OCI-LY7 (cell line): ENCODE measurements at regions of chr12 and their contacts with region 1.

Region 1: GRCh38 chr12:49121047-49121696 is 10.0 kb downstream of the TUBA1B start:
- DNase-seq: peak; percentile 26
- H3K4me3 ChIP-seq: no peak overlapping the region
- H3K27ac ChIP-seq: no peak overlapping the region
- H3K4me1 ChIP-seq: no peaks in the 10 kb centered on the region
- CTCF ChIP-seq: peak; percentile 62

Region 2: GRCh38 chr12:49069507-49070346 is 51.4 kb before region 1 on chr12 and contains the start of gene RHEBL1:
- CTCF ChIA-PET with region 1: no interaction called
- POLR2A ChIA-PET with region 1: interaction called, 10 read pairs
- intact Hi-C with region 1: no loop called
- DNase-seq: peak; percentile 98
- H3K4me3 ChIP-seq: peak within 1 kb of the TSS; percentile 83
- H3K27ac ChIP-seq: peak within 1 kb of the TSS; percentile 28
- H3K4me1 ChIP-seq: peaks cover 10% of the 10 kb centered on the region
- CTCF ChIP-seq: peak; percentile 64
- total RNA-seq, gene RHEBL1: 3.0 and 3.7 TPM in 2 replicates

Region 3: DNA sequence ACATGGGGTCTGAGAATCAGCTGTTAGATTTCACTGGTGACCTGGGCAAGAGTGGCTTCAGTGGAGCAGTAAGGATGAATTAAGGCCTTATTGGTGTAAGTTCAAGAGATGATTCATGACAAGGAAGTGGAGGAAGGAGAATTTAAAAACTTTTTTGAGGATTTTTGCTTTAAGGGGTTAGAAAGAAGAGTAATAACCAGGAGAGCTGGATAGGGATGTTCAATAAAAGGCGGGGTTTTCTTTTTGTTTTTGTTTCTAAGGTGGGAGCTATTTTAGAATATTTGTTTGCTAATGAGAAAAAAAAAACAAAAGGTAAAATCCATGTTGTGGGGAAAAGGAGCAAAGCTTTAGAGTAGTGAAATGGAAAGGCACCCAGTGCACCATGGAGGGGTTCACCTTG is 25.2 kb after region 1 on chr12:
- CTCF ChIA-PET with region 1: no interaction called
- POLR2A ChIA-PET with region 1: no interaction called
- intact Hi-C with region 1: no loop called
- DNase-seq: no peak
- H3K4me3 ChIP-seq: no peak overlapping the region
- H3K27ac ChIP-seq: no peak overlapping the region
- H3K4me1 ChIP-seq: no peaks in the 10 kb centered on the region
- CTCF ChIP-seq: no peak